ENCODE measurements at regions of chr9 and their contacts with region 1.

Region 1: DNA sequence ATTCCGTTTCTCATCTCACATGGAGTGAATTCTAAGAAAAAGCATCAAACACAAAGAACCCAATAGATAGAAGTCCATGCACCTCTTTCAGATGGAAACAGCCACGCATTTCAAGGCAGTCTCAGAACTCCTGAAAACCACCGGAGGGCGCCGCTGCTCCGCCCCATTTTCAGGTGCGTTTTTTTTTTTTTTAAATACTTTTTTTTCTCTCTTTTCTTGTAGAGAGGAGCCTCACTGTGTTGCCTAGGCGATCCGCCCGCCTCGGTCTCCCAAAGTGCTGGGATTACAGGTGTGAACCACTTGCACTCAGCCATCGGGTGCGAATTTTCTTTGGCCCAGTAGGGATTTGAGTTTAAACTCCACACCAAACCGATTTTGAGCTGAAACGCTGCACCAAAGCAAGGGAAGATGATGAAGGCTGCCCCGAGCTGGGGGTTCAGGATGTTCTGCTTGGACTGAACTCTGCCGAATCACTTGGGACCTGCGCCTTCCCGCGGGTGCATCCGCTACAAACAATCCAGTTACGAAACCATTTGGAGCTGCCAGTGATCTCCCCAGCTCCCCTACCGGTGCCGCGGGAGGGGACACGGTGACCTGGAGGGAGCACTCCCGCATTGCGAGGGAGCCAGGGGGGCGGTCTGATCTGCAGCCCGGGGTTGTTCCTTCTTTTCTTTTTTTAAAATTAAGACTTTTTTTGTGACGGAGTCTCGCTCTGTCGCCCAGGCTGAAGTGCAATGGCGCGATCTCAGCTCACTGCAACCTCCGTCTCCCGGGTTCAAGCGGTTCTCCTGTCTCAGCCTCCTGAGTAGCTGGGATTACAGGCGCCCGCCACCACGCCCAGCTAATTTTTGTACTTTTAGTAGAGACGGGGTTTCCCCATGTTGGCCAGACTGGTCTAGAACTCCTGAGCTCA is 1.4 kb downstream of the PTGR1 start:
- DNase-seq: peak; percentile 55
- ATAC-seq: peak; percentile 67
- H3K4me3 ChIP-seq: peak overlapping the region; percentile 62 to 87 (median 77)
- H3K27ac ChIP-seq: peak overlapping the region; percentile 76
- H3K4me1 ChIP-seq: peaks cover 39% of the 10 kb centered on the region
- H3K27me3 ChIP-seq: no peaks in the 10 kb centered on the region
- CTCF ChIP-seq: peak; percentile 73
- EP300 ChIP-seq: no peak
- POLR2A ChIP-seq: no peak
- RAD21 ChIP-seq: peak; percentile 25; the same call in 1 of the 2 replicates

Region 2: GRCh38 chr9:111525056-111525977 is 72.8 kb before region 1 on chr9 and contains the start of gene ZNF483:
- CTCF ChIA-PET with region 1: no interaction called
- POLR2A ChIA-PET with region 1: no interaction called
- in situ Hi-C with region 1: no loop called
- intact Hi-C with region 1: loop called (anchors 2 kb)
- DNase-seq: peak; percentile 78
- ATAC-seq: peak; percentile 95
- H3K4me3 ChIP-seq: peak within 1 kb of the TSS; percentile 80 to 91 (median 86)
- H3K27ac ChIP-seq: peak within 1 kb of the TSS; percentile 28
- H3K4me1 ChIP-seq: peaks cover 22% of the 10 kb centered on the region
- H3K27me3 ChIP-seq: no peaks in the 10 kb centered on the region; a peak in 1 of 5 replicates
- CTCF ChIP-seq: no peak
- EP300 ChIP-seq: no peak
- POLR2A ChIP-seq: peak in 1 of 2 experiments; percentile 70; a peak in 2 of 4 replicates
- RAD21 ChIP-seq: no peak
- total RNA-seq, gene ZNF483: 9.5 and 15.7 TPM in 2 replicates

Region 3: DNA sequence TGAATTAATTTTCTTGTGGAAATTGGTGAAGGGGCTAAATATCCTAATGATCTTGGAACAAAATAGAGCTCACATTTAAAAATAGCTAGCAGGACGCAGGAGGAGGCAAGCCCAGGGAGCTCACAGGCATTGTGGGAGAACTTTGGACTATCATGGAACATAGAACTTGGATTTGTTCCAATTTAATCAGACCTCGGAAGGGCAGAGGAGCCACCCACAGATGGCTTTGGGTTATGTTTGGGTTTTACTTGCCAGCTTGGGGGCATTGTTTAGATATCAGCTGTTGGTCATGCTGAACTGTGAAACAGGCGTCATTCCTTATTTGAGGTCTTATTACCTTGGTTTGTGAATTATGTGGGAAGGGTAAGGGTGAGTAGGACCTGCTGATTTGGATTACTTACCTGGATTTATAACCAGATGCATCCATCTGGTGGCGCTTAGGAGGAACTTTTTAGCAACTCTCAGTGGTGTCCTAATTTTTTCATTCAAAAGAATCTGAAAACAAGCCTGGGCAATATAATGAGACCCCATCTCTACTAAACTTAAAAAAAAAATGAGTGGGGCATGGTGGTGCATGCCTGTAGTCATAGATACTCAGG is 15.5 kb after region 1 on chr9:
- CTCF ChIA-PET with region 1: interaction called, 3 read pairs
- POLR2A ChIA-PET with region 1: interaction called, 9 read pairs
- in situ Hi-C with region 1: no loop called
- intact Hi-C with region 1: loop called (anchors 2 kb)
- DNase-seq: peak; percentile 62
- ATAC-seq: peak; percentile 66
- H3K4me3 ChIP-seq: no peak overlapping the region
- H3K27ac ChIP-seq: no peak overlapping the region
- H3K4me1 ChIP-seq: peaks cover 39% of the 10 kb centered on the region
- H3K27me3 ChIP-seq: no peaks in the 10 kb centered on the region
- CTCF ChIP-seq: no peak
- EP300 ChIP-seq: no peak
- POLR2A ChIP-seq: no peak
- RAD21 ChIP-seq: no peak

Region 4: GRCh38 chr9:111621895-111622480 is 23.9 kb after region 1 on chr9:
- CTCF ChIA-PET with region 1: interaction called, 27 read pairs
- POLR2A ChIA-PET with region 1: interaction called, 7 read pairs
- in situ Hi-C with region 1: no loop called
- intact Hi-C with region 1: loop called (anchors 2 kb)
- DNase-seq: peak; percentile 47
- ATAC-seq: peak; percentile 91
- H3K4me3 ChIP-seq: no peak overlapping the region
- H3K27ac ChIP-seq: no peak overlapping the region
- H3K4me1 ChIP-seq: peaks cover 5% of the 10 kb centered on the region
- H3K27me3 ChIP-seq: no peaks in the 10 kb centered on the region
- CTCF ChIP-seq: peak; percentile 69
- EP300 ChIP-seq: no peak
- POLR2A ChIP-seq: no peak
- RAD21 ChIP-seq: peak; percentile 74

Region 5: DNA sequence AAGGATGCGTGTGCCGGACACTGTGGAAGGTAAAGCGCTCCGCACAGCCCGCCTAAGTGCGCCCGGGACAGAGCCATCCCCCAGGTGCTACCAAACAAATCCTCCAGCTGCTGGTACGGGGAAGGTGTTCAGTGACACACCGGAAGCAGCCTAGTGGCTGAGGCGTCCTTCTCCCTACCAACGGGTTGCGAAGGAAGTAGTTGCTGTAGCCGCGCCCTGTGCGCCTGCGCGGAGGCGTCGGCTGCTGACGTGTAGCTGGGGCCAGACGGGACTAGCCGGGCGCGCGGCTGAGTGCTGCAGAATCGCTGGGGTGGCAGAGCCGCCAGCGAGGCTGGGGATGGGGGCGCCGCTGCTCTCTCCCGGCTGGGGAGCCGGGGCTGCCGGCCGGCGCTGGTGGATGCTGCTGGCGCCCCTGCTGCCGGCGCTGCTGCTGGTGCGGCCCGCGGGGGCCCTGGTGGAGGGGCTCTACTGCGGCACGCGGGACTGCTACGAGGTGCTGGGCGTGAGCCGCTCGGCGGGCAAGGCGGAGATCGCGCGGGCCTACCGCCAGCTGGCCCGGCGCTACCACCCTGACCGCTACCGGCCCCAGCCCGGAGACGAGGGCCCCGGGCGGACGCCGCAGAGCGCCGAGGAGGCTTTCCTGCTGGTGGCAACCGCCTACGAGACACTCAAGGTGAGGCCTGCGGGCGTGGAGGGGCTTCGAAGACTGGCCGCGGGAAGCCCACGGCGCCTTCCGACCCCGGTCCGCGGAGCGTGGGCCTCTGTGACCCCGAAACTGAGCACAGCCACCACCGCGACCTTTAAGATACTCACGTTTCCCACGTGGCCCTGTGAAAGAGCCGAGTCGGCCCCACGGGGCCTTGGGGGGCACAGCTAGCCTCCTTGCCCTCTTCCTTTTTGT is 33.2 kb after region 1 on chr9 and contains the start of gene DNAJC25:
- CTCF ChIA-PET with region 1: no interaction called
- POLR2A ChIA-PET with region 1: interaction called, 18 read pairs
- in situ Hi-C with region 1: no loop called
- intact Hi-C with region 1: loop called (anchors 2 kb)
- DNase-seq: peak; percentile 96
- ATAC-seq: peak; percentile 89
- H3K4me3 ChIP-seq: peak within 1 kb of the TSS; percentile 73 to 98 (median 91)
- H3K27ac ChIP-seq: peak within 1 kb of the TSS; percentile 80
- H3K4me1 ChIP-seq: peaks cover 64% of the 10 kb centered on the region
- H3K27me3 ChIP-seq: no peaks in the 10 kb centered on the region; a peak in 1 of 5 replicates
- CTCF ChIP-seq: peak; percentile 38
- EP300 ChIP-seq: peak in 1 of 2 experiments; percentile 61; a peak in 1 of 4 replicates
- POLR2A ChIP-seq: peak; percentile 99 to 100
- RAD21 ChIP-seq: peak; percentile 82
- total RNA-seq, gene DNAJC25: 6.3 and 10.2 TPM in 2 replicates

Region 6: GRCh38 chr9:111691672-111692329 is 93.7 kb after region 1 on chr9:
- CTCF ChIA-PET with region 1: interaction called, 19 read pairs
- POLR2A ChIA-PET with region 1: interaction called, 5 read pairs
- in situ Hi-C with region 1: loop called (anchors 10 kb)
- intact Hi-C with region 1: loop called (anchors 1 kb)
- DNase-seq: peak; percentile 52
- ATAC-seq: 0 out of 3 replicates have a peak, but pooled peaks have one; percentile 41
- H3K4me3 ChIP-seq: no peak overlapping the region
- H3K27ac ChIP-seq: no peak overlapping the region
- H3K4me1 ChIP-seq: peaks cover 8% of the 10 kb centered on the region
- H3K27me3 ChIP-seq: no peaks in the 10 kb centered on the region
- CTCF ChIP-seq: peak; percentile 57
- EP300 ChIP-seq: no peak
- POLR2A ChIP-seq: no peak
- RAD21 ChIP-seq: 0 out of 2 replicates have a peak, but pooled peaks have one; percentile 58

Measured in HepG2 (cell line).